ENCODE measurements at regions of chr10 and their contacts with region 1.

Region 1: DNA sequence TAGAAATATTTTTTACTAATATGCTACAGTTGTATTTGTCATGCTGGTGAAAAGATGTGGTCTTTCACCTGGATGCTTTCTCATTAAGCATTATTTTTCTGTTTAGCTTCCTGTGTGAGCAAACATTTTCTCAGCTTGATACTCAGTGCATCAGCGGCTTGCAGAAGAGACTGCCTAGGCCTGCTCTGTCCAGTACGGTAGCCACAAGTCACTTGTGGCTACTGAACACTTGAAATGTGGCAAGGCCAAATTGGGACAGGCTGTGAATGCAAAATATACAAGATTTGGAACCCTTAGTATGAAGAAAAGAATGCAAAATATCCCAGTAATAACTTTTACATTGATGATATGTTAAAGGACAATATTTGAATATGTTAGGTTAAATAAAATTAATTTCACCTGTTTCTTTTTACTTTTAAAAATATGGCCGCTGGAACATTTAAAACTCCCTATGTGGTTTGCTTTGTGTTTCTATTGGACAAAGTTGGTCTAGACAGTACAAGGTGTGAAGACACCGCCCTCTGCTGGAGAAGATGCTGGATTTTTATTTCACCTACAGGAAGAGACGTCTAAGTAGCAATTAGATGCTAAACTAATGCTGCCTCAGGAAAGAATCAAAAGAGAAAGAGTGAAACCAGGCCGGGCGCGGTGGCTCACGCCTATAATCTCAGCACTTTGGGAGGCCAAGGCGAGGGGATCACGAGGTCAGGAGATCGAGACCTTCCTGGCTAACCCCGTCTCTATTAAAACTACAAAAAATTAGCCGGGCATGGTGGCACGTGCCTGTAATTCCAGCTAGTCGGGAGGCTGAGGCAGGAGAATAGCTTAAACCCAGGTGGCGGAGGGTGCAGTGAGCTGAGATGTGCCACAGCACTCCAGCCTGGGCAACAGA is 5.3 kb downstream of the SRGN start:
- DNase-seq: peak; percentile 56
- ATAC-seq: peak; percentile 92

Region 2: GRCh38 chr10:69007260-69007659 is 85.9 kb before region 1 on chr10:
- intact Hi-C with region 1: loop called (anchors 2 kb)
- DNase-seq: no peak
- ATAC-seq: no peak